ENCODE measurements at regions of chr19 and their contacts with region 1.

Region 1: DNA sequence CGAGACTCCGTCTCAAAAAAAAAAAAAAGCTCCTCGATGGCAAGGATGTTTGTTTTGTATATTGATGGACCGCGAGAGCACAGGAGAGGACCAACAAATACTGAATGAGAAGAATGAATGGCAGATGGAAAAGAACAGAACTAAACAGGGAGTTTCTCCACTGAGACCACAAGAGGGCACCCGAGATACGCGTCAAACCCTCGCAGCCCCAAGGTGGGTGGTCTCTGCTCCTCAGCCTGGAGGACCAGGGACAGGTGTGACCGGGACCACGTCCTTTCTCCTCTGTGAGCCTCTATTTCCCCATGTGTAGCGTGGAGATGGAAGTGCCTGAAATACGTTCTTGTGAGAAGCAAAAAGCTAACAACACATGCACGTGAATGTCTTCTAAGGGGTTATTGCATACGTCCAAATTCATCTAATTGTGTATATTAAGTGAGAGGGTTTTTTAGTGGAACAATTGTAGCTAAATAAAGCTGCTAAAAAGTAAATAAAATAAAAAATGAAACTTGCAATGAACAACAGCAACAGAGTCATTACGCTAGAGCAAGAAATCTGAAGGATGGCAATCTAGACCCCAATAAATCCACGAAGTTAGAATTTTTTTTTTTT is 8.3 kb upstream of the CDC42EP5 start:
- DNase-seq: peak; percentile 61
- H3K4me3 ChIP-seq: no peak overlapping the region
- H3K27ac ChIP-seq: no peak overlapping the region
- H3K4me1 ChIP-seq: no peaks in the 10 kb centered on the region
- CTCF ChIP-seq: peak; percentile 86

Region 2: DNA sequence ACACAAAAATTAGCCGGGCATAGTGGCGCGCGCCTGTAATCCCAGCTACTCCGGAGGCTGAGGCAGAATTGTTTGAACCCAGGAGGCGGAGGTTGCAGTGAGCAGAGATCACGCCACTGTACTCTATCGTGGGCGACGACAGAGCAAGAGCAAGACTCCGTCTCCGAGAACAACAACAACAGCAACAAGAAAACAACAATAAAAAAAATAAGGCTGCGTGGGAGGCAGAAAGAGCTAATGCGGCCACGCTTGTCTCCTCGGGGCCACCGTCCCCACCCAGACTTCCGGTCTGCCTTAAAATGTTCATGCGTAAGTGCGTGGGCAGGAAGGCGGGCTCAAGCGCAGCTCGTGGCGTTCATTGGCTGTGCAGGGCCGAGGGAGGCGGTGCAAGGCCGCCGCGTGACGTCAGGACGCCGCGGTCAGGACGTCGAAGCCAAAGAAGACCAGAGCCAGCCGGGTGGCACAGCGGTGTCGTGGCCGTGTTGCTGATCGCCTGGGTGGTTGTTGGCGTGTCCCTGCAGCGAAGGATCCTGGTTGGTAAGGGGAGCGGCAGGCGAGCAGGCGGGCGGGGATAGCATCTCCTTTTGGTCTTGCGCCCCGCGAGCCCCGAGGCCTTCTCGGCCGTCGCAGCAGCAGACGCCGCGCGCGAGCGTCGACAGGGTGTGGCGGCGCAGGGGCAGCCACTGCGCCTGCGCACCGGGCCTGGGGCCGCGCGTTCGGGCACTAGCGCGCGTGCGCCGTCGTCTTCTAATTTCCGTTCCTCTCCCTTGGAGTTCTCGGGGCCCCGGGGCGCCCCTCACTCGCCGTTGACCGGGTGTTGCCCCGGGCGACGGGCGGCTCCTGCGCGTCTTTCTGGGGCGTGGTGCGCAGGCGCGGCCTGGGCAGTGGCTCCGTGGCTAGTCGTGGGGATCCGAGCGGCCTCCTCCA is 32.4 kb before region 1 on chr19 and contains the start of gene LENG8:
- CTCF ChIA-PET with region 1: no interaction called
- POLR2A ChIA-PET with region 1: no interaction called
- intact Hi-C with region 1: no loop called
- DNase-seq: peak; percentile 98
- H3K4me3 ChIP-seq: peak within 1 kb of the TSS; percentile 98
- H3K27ac ChIP-seq: peak within 1 kb of the TSS; percentile 72
- H3K4me1 ChIP-seq: peaks cover 26% of the 10 kb centered on the region
- CTCF ChIP-seq: no peak
- total RNA-seq, gene LENG8: 55.7 and 63.2 TPM in 2 replicates

Region 3: DNA sequence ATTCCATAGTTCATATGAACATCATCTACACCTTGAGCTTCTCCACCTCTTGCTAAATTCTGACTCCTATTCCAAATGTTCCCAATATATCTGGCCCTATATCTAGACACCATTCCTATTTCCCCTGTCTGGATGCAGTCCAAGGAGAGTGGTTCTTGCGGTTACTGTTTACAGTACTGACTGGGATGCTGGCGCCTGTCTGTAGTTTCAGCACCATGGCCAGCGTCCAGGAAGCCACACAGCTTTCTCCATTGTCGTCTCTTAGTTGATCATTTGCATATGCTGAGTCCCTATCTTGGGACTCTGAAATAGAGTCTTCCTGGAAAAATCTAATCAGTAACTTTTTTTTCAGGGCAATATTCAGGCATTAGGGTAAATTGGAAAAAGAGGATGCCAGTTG is 36.1 kb after region 1 on chr19:
- CTCF ChIA-PET with region 1: no interaction called
- POLR2A ChIA-PET with region 1: interaction called, 11 read pairs
- intact Hi-C with region 1: no loop called
- DNase-seq: peak; percentile 61
- H3K4me3 ChIP-seq: no peak overlapping the region
- H3K27ac ChIP-seq: no peak overlapping the region
- H3K4me1 ChIP-seq: peaks cover 5% of the 10 kb centered on the region
- CTCF ChIP-seq: no peak

Region 4: DNA sequence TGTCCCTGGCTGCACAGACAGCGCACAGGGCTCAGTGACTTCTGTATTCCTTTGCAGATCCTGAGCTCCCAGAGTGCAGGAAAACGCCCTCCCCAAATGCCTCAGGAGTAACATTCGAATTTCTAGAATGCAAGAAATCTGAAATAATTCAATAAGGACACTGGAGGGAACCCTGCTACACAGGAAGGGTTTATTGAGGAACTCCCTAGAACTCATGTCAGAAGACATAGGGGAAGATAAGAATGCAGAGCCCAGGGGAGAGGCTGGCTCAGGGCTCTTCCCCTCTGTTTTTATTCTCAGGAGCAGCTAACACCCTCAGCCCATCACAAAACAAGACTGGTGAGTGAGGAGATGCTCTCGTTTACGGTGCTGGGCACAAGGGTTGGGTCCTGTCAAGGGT is 118.8 kb after region 1 on chr19:
- CTCF ChIA-PET with region 1: no interaction called
- POLR2A ChIA-PET with region 1: no interaction called
- intact Hi-C with region 1: no loop called
- DNase-seq: no peak
- H3K4me3 ChIP-seq: no peak overlapping the region
- H3K27ac ChIP-seq: no peak overlapping the region
- H3K4me1 ChIP-seq: no peaks in the 10 kb centered on the region
- CTCF ChIP-seq: no peak

Region 5: DNA sequence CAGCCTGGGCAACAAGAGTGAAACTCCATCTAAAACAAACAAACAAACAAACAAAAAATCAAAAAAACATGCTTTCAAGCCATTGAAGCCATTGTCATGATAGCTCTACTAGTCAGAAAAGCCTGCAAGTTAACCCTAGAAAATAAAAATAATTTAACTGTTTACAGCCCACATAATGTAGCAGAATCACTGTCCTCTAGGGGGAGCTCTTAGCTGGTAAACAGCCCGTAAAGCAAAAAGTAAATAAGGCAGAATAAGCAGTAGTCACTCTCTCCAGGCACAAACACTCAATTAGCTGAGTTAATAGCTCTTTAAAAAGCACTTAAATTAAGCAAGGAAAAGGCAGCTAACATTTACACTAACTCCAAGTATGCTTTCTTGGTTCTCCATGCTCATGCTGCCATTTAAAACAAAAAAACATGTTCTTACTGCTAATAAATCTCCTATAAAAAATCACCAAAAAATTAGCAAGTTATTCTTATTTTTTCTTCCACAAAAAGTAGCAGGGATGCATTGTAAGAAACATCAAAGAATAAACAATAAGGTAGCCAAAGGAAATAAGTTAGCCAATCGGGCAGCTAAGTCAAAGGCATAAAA is 192.7 kb after region 1 on chr19:
- CTCF ChIA-PET with region 1: no interaction called
- POLR2A ChIA-PET with region 1: no interaction called
- intact Hi-C with region 1: loop called (anchors 1 kb)
- DNase-seq: peak; percentile 63
- H3K4me3 ChIP-seq: no peak overlapping the region
- H3K27ac ChIP-seq: no peak overlapping the region
- H3K4me1 ChIP-seq: no peaks in the 10 kb centered on the region
- CTCF ChIP-seq: peak; percentile 92